Aorta (tissue), 5 donors: ENCODE measurements at regions of chr11 and their contacts with region 1.

Region 1: GRCh38 chr11:1335811-1336761 is 26.7 kb upstream of the TOLLIP start:
- DNase-seq: peak; percentile 81 to 88
- ATAC-seq: peak; percentile 76
- H3K4me3 ChIP-seq: peak overlapping the region; percentile 7 to 41
- H3K27ac ChIP-seq: peak overlapping the region in 1 of 2 donors; percentile 18
- H3K4me1 ChIP-seq: no peaks in the 10 kb centered on the region
- H3K27me3 ChIP-seq: no peaks in the 10 kb centered on the region

Region 2: DNA sequence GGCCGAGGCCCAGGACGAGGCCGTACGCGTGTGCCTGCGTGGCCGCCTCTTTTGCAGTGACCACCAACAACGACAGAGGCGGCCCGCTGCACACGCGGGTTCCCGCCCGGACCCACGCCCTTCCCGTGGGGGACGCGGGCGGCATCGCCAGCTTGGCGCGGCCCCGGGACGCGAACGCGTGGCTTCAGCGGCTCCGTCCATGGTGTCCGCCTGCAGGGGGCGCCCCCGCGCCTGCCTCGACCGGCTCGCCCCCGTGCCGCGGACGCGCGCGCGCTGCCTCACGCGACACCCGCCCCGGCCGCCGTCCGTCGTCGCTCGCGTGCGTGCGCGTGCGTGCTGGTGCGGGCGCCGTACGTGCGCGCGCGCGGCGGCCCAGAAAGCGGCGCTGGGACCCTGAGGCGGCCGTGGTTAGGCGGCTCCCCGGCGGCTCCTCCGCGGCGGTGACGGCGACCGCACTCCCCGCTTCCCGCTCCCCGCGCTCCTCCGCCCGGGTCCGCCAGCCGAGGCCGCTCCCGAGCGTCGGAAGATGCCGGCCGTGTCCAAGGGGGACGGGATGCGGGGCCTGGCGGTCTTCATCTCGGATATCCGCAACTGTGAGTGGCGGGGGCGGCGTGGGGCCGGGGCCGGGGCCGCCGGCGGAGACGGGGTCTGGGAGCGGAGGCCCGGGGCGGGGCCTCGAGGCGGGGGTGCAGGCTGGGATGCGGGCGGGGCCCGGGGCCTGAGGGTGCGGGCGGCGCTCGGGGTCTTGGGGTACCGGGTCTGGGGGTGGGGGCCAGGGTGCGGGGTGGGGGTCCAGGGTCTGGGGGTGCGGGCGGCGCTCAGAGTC is 410.4 kb before region 1 on chr11 and contains the start of gene AP2A2:
- intact Hi-C with region 1: loop called in 1 of 2 experiments (anchors 5 kb)
- DNase-seq: peak; percentile 94 to 96
- ATAC-seq: peak; percentile 91
- H3K4me3 ChIP-seq: peak within 1 kb of the TSS; percentile 96 to 97
- H3K27ac ChIP-seq: peak within 1 kb of the TSS; percentile 7 to 62
- H3K4me1 ChIP-seq: no peaks in the 10 kb centered on the region
- H3K27me3 ChIP-seq: no peaks in the 10 kb centered on the region
- total RNA-seq, gene AP2A2: 93.3 to 147 TPM

Region 3: DNA sequence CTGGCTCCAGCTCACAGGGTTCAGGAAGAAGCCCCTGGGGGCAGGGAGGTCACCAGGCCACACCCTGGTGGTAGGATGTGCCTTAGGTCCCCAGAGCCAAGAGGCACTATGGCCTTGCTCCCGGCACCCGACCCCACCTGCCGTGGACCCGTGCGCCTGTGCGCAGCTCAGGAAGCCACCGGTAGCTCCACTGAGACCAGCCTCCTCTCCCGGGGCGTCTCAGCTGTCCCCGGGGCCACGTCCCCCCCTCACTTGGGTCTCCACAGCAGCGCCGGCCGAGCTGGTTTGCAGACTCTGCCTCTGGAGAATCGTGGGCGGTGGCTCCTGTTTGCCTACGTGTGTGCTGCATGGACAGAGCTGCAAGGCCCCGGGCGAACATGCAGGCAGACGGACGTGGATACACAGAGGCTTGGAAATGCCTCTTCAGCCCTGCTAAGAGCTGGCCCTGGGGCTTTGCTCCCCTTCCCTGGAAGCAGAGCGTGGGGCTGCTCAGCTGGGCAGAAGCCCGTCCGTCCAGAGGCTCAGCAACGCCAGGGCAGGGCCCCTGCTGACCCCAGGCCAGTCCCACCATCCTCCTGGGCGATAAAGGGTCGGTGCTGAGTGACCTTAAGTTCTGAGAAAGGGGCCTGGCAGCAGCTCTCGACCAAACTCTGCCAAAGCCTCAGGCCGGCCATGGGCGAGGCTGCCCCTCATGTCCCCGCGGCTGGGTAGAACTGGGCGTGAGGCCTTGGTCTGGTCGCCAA is 128.5 kb before region 1 on chr11:
- intact Hi-C with region 1: no loop called
- DNase-seq: peak; percentile 44 to 77
- ATAC-seq: no peak
- H3K4me3 ChIP-seq: no peak overlapping the region
- H3K27ac ChIP-seq: no peak overlapping the region
- H3K4me1 ChIP-seq: no peaks in the 10 kb centered on the region
- H3K27me3 ChIP-seq: no peaks in the 10 kb centered on the region

Region 4: DNA sequence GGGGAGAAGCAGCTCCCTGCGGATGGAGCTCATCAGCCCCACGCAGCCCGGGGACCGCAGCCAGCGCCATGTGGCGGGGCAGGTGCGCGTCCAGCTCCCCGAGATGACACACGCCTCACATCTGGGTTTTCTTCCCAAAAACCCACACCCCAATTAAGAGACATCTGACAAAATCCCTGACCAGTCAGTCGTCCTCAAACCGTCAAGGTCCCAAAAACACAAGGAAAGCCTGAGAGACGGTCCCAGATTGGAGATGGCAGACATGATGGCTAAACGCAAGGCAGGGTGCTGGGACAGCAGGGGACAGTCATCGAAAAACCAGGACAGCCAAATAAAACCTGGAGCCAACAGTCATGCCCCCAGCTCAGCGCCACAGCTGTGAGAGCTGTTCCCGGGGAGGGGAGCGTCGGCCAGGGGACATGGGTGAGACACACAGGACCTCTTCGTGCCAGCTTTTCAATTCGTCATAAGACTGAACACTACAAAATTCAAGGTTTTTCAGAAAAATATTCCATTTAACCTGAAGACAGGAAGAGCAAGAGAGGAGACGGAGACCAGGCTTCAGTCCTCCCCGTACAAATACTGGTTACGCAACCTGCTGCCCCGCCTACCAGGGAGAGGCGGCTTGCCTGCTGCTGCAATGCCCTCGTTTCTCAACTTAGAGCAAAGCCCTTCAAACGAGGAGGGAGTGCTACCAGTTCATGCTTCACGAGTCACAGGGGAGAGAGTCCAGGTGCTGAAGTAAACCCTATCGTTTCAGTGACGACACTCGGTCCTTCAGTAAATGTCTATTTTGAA is 37.2 kb before region 1 on chr11:
- intact Hi-C with region 1: loop called in 1 of 2 experiments (anchors 5 kb)
- DNase-seq: peak; percentile 85 to 92
- ATAC-seq: peak; percentile 80
- H3K4me3 ChIP-seq: no peak overlapping the region
- H3K27ac ChIP-seq: no peak overlapping the region
- H3K4me1 ChIP-seq: no peaks in the 10 kb centered on the region
- H3K27me3 ChIP-seq: no peaks in the 10 kb centered on the region

Region 5: DNA sequence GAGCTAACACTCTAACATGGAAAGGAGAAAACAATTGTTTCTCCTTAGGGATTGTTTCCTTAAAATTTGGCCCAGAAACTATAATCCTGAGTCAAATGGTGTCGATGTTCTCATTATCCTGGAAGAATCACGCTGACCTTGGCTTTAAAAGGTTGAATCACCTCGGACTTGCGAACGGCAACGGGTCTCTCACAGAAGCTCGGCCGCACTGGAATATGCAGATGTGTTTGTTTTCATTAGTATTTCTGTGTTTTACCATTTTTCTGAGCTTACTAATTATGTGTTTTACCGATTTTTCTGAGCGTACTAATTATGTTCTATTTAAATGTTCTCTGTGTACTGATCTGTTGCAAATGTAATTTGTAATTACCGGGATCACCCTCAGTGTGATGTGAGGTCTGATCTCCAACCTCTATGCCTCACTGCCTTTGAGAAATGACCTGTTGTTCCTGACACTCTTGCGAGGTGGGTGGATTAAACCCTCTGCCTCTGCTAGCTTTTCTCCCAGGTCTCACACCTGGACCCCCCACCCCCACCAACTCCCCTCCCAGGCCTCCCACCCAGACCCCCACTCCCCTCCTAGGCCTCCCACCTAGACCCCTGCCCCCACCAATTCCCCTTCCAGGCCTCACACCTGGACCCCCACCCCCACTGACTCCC is 15.3 kb after region 1 on chr11:
- intact Hi-C with region 1: no loop called
- DNase-seq: peak in 1 of 2 donors; percentile 36
- ATAC-seq: no peak
- H3K4me3 ChIP-seq: no peak overlapping the region
- H3K27ac ChIP-seq: no peak overlapping the region
- H3K4me1 ChIP-seq: no peaks in the 10 kb centered on the region
- H3K27me3 ChIP-seq: no peaks in the 10 kb centered on the region

Region 6: GRCh38 chr11:1382831-1383607 is 46.9 kb after region 1 on chr11:
- intact Hi-C with region 1: loop called in 1 of 2 experiments (anchors 2 kb)
- DNase-seq: peak; percentile 91 to 94
- ATAC-seq: peak; percentile 90
- H3K4me3 ChIP-seq: peak overlapping the region in 1 of 2 donors; percentile 17
- H3K27ac ChIP-seq: peak overlapping the region in 1 of 2 donors; percentile 7
- H3K4me1 ChIP-seq: no peaks in the 10 kb centered on the region
- H3K27me3 ChIP-seq: no peaks in the 10 kb centered on the region

Region 7: DNA sequence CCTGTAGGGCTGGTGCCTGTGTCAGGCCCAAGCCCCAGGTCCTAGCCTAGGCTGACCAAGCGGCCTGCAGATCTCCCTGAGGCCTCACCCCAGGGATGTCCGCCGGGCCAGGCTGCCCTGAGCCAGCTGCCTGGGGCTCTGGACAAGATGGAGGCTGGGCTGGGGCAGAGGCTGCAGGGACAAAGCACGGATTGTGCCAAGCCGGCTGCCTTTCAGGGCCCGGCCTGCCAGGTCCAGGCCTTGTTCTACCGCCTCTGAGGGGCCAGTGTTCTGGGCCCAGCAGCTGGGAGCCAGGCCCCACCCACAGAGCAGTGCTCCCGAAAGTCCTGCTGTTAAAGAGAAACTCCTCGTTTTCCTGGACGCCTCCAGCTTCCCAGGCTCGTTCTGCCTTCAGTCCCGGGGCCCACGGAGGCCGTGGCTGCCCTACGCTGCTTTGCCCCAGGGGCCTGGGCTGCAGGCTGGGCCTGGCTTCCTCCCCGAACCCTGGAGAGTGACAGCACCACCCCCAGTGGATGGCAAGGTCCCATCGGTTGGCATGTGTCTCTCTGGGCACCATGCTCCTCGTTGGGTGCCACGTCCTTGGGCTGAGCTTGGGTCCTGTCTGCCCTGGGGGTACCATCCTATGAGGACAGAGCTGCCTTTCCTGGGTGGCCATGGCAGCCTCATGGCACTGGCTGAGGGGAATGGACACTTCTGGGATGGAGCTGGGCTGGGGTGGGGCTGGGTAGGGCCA is 61.2 kb after region 1 on chr11:
- intact Hi-C with region 1: no loop called
- DNase-seq: peak in 1 of 2 donors; percentile 34
- ATAC-seq: no peak
- H3K4me3 ChIP-seq: no peak overlapping the region
- H3K27ac ChIP-seq: no peak overlapping the region
- H3K4me1 ChIP-seq: no peaks in the 10 kb centered on the region
- H3K27me3 ChIP-seq: no peaks in the 10 kb centered on the region